ENCODE measurements at regions of chr1 and their contacts with region 1.

Region 1: DNA sequence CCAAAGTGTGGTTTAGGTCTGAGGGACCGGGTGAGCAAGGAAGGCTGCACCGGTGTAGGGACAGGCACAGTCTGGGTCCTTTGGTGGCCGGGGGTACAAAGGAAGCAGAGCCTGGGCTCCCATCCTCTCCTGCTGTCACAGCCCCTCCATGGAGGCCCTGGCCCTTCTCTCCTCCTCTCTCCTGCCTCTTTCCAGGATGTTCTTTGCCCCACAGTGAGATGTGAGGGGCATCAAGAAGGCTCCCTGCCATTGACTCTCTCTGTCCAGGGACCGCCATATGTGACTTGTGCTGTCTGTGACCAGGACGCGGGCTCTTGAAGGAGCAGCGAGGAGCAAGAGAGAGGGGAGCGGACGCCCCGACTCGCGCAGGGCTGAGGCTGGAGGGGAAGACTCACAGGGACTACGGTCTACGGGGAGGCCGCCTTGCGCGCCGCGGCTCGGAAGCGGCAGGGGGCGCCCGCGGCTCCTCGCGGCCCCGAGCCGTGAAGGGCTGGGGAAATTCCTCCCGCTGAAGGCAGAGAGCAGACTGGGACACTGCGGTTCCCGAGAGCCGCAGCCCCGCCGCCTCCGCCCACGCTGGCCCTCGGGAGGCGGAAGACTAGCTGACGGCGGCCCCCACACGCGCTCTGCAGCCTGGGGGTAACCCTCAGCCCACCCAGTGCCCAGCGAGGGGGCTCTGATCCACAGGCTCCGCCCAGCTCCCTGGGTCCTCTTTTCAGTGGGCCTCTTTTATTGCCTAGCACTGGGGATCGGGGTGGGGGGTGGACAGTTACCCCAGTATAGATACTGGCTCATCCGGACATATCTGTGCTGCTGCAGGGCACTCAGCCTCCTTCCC is 40.8 kb downstream of the MAB21L3 start:
- DNase-seq: peak; percentile 60 to 84 (median 75)
- H3K4me3 ChIP-seq: peak overlapping the region in 2 of 4 donors; percentile 44 to 56
- H3K27ac ChIP-seq: peak overlapping the region in 2 of 5 donors; percentile 46 to 69
- H3K4me1 ChIP-seq: peaks cover 0 to 4% of the 10 kb centered on the region in 2 donors
- H3K27me3 ChIP-seq: no peaks in the 10 kb centered on the region
- CTCF ChIP-seq: peak; percentile 71 to 94 (median 85)
- POLR2A ChIP-seq: no peak

Region 2: DNA sequence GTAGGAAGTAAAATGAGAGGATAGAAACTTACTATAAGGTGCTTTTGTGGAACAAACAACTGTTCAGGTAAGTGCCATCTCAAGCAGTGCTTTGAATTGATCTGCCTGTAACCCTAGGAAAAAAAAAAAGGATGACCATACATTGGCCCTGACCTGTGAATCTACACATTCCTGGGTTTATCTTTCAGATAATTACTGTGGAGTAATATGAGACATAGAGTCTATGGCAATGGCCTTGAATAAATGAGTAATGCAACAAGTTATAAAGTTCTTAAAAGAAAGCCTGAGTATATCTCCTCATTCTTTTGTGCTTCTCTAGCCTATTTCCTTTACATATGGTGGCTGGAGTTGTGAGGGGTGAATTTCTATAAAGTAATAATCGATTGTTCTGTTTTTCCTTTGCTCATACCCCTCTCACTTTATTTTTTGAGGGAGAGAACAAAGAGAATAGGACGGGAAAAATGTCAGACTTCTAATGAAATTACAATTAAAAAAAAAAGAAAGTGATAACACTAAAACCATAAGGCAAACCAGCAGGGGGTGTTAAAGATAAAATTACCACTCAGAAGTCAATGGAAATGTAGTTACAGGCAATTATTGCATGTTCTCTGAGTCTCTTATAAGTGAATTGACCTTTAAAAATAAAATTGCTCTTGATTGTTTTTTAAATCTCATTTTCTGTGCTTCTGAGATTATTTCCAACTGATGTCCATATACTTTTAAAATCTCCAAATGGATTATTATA is 208.6 kb after region 1 on chr1:
- intact Hi-C with region 1: loop called in 1 of 2 experiments (anchors 10 kb)
- DNase-seq: no peak
- H3K4me3 ChIP-seq: no peak overlapping the region
- H3K27ac ChIP-seq: no peak overlapping the region
- H3K4me1 ChIP-seq: peaks cover 0 to 4% of the 10 kb centered on the region in 2 donors
- H3K27me3 ChIP-seq: no peaks in the 10 kb centered on the region
- CTCF ChIP-seq: peak; percentile 17 to 63 (median 48)
- POLR2A ChIP-seq: no peak

Region 3: DNA sequence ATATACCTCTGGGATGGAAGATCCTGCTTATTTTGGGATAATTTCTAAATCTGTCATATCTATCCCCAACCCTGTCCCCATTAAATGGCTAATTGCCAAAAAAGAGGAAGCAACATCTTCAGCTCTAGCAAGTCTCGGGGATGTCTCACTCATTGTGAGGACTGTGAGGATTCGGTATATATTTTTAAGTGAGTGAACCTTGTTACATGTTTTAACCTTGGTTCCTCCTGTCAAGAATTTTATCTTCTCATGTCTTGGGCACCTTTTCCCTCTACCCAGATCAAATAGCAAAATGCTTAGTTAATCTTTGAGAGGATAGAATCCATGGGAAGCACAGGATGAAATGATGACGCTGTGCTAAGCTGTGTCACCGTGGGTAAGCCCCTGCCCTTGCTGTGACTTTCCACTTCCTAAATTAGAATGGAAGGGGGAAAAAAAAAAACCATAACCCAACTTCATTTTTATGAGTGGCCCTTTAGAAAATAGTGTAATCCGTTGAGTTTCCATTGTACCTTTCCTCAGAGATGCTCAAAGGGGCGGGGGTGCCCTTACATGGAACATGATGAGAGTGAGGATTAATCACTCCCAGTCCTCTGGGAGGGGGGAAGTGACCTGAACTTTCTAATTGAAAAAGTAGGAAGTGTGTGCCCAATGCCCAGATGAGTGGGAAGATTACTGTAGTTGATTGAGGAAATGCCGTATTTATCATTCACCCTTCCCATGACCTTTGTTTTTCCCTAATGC is 228.7 kb after region 1 on chr1:
- intact Hi-C with region 1: loop called in 1 of 2 experiments (anchors 10 kb)
- DNase-seq: no peak
- H3K4me3 ChIP-seq: no peak overlapping the region
- H3K27ac ChIP-seq: no peak overlapping the region
- H3K4me1 ChIP-seq: peaks cover 46 to 96% of the 10 kb centered on the region in 2 donors
- H3K27me3 ChIP-seq: no peaks in the 10 kb centered on the region
- CTCF ChIP-seq: no peak
- POLR2A ChIP-seq: no peak

Region 4: GRCh38 chr1:116476321-116476720 is 324.4 kb after region 1 on chr1:
- intact Hi-C with region 1: loop called in 1 of 2 experiments (anchors 2 kb)
- DNase-seq: no peak
- H3K4me3 ChIP-seq: no peak overlapping the region
- H3K27ac ChIP-seq: no peak overlapping the region
- H3K4me1 ChIP-seq: no peaks in the 10 kb centered on the region
- H3K27me3 ChIP-seq: no peaks in the 10 kb centered on the region
- CTCF ChIP-seq: no peak
- POLR2A ChIP-seq: no peak

Region 5: DNA sequence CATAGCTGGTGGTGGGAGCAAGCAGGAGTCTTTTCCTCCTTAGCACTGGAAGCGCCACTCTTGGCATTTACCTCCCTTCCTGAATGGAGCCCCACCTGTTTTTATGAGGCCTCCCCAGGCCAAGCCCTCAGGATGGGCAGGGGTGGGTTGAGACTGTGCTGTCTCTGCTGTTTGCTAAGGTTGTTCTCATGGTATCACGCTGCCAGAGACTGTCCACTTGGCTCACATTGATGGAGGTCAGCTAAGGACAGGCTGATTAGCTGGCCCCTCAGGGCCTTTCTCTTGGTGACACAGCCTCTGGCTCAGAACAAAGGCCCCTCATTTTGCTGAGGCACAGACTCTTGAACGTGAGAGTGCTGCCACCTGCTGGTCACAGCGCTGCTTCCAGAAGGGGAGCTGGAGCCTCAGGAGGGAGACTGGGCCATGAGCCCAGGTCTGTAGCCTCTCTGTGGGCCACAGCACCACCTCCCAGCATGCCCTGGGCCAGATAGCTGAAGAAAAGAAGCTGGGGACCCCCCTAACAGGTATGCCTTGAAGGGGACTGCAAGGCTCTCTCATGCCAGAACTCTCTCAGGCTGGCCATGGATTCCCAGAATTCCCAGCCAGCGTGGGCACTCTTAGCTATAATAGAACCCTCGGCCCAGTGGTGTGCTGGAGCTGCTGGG is 333.2 kb after region 1 on chr1:
- intact Hi-C with region 1: loop called in 1 of 2 experiments (anchors 5 kb)
- DNase-seq: peak; percentile 80 to 96 (median 86)
- H3K4me3 ChIP-seq: no peak overlapping the region
- H3K27ac ChIP-seq: no peak overlapping the region
- H3K4me1 ChIP-seq: no peaks in the 10 kb centered on the region
- H3K27me3 ChIP-seq: no peaks in the 10 kb centered on the region
- CTCF ChIP-seq: peak; percentile 83 to 94 (median 92)
- POLR2A ChIP-seq: no peak

Measured in adrenal gland (tissue), 19 donors.